ENCODE measurements at regions of chr18 and their contacts with region 1.

Region 1: DNA sequence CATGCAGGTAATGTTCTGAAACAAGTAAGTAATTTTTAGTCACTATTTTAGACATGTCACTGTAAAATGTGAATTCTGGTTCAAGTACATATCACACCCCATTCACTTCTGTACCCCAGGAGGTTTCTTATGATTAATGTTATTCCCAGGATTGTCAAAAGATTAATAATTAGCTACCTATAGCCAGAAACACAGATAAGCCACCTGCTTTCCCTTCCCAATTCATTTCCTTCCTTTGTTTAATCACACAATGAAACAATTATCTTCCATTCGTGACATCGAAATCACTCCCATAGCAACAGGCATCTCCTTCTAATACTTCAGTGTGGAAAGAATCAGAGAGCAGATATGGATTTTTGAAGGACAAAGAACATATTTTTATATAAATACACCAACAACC is 1650.3 kb upstream of the CELF4 start:
- DNase-seq: peak; percentile 9
- H3K4me3 Mint-ChIP-seq: peak overlapping the region; percentile 36
- H3K27ac Mint-ChIP-seq: peak overlapping the region; percentile 30
- H3K4me1 Mint-ChIP-seq: peaks cover 27% of the 10 kb centered on the region
- H3K27me3 Mint-ChIP-seq: no peaks in the 10 kb centered on the region
- CTCF ChIP-seq: no peak

Region 2: DNA sequence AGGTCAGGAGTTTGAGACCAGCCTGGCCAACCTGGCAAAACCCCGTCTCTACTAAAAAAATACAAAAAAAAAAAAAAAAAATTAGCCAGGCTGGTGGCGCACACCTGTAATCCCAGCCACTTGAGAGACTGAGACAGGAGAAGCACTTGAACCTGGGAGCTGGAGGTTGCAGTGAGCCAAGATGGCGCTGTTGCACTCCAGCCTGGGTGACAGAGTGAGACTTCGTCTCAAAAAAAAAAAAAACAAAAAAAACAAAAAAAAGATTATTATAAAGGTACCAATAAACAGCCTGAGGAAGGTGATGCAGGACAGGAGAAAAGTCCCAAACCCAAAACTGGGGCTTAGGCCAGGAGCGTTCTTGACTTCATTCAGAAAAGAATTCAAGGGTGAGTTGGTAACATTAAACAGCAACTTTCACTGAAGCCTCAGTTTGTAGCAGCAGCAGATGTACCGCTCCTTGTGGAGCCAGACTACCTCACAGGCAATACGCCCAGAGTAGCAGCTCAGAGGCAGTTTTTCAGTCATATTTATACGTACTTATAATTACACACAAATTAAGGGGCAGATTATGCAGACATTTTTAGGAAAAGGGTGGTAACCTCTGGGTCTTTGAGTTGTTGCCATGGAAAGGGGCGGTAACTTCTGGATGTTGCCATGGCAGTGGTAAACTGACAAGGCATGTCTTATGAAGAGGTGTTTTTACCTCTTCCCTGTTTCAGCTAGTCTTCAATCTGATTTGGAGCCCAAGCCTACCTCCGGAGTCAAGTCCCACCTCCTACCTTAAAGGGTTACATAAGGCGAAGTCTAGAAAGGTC is 53.7 kb before region 1 on chr18:
- CTCF ChIA-PET with region 1: no interaction called
- intact Hi-C with region 1: no loop called
- DNase-seq: no peak
- H3K4me3 Mint-ChIP-seq: no peak overlapping the region
- H3K27ac Mint-ChIP-seq: no peak overlapping the region
- H3K4me1 Mint-ChIP-seq: no peaks in the 10 kb centered on the region
- H3K27me3 Mint-ChIP-seq: no peaks in the 10 kb centered on the region
- CTCF ChIP-seq: no peak

Region 3: GRCh38 chr18:39205565-39206195 is 10.2 kb before region 1 on chr18:
- CTCF ChIA-PET with region 1: no interaction called
- intact Hi-C with region 1: no loop called
- DNase-seq: no peak
- H3K4me3 Mint-ChIP-seq: no peak overlapping the region
- H3K27ac Mint-ChIP-seq: no peak overlapping the region
- H3K4me1 Mint-ChIP-seq: peaks cover 15% of the 10 kb centered on the region
- H3K27me3 Mint-ChIP-seq: no peaks in the 10 kb centered on the region
- CTCF ChIP-seq: no peak

Region 4: GRCh38 chr18:39313992-39314391 is 98.1 kb after region 1 on chr18:
- CTCF ChIA-PET with region 1: no interaction called
- intact Hi-C with region 1: loop called (anchors 5 kb)
- DNase-seq: peak; percentile 15
- H3K4me3 Mint-ChIP-seq: no peak overlapping the region
- H3K27ac Mint-ChIP-seq: peak overlapping the region; percentile 26
- H3K4me1 Mint-ChIP-seq: peaks cover 49% of the 10 kb centered on the region
- H3K27me3 Mint-ChIP-seq: no peaks in the 10 kb centered on the region
- CTCF ChIP-seq: no peak

Measured in Calu3 (cell line).